RWPE1 (cell line): ENCODE measurements at regions of chr9 and their contacts with region 1.

Region 1: DNA sequence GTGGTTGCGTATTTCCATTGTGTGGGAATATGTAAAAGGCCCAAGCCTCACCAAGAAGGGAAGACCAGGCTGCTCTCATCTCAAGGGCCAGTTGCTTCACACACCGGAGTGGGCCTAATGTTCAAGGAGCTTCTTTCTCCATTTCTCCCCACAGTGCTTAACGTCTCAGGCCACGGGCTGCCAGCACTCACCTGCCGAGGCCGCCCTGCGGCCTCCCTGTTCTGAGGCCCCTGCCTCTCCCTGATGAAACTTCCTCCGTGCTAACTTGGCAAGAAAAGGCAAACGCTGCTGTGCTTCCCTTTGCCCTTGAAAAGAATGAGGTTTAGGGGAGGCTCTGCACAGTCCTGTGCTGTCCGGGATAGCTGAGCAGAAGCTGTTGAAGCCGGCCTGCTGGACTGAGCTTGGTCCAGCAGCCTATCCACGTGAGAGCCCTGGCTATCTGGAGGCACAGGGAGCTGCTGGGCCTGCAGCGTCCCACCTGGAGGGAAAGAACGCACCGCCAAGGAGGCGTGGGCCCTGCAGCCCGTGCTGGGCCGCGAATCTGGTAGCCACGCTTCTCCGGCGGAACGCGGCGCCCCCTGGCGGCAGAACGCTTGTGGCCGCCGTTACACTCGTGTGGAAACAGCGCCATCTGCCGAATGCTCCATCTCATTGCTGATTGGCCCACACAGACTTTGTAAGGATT is 73.5 kb upstream of the PRSS3 start:
- DNase-seq: peak; percentile 82
- H3K27ac ChIP-seq: no peak overlapping the region
- CTCF ChIP-seq: peak; percentile 100

Region 2: GRCh38 chr9:33623658-33624586 is 97.9 kb before region 1 on chr9:
- CTCF ChIA-PET with region 1: interaction called, 80 read pairs
- POLR2A ChIA-PET with region 1: interaction called, 7 read pairs
- DNase-seq: peak; percentile 85
- H3K27ac ChIP-seq: no peak overlapping the region
- CTCF ChIP-seq: peak; percentile 98

Region 3: DNA sequence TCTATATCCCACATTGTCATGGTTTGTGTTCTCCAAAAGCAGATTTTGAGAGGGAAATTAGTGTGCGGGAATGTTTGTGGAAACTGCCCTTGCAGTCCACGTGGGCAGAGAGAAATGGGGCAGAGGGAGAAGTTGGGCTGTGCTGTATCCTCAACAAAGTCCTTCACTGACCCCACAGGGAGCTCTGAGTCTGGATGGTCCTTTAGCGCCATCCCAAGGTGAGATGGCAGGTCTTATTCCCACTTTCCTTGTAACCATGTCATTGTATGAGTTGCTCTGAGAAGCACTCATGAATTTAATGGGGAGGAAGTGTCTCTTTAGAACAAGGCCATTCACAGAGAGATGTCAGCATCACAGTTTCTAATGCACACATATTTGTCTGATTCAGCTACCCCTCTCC is 70.7 kb before region 1 on chr9:
- CTCF ChIA-PET with region 1: interaction called, 11 read pairs
- POLR2A ChIA-PET with region 1: no interaction called
- DNase-seq: no peak
- H3K27ac ChIP-seq: no peak overlapping the region
- CTCF ChIP-seq: no peak

Region 4: DNA sequence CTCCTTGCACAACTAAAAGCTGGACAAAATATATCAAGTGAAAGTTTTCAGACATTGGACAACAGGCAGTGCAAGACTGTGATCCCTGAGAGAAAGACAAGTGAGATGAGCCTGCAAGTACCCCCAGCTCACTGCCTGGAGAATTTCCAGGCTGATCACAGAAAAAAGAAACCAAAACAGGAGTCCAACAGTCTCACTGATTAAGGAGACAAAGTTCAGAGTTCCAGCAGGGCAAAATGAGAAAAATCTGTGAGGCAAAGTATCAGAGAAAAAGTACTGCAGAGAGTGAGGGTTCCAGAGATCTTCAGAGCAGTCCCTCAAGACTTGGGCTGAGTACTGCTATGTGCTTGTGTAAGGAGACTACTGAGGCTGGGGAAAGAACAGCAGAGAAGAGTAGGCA is 17.6 kb after region 1 on chr9:
- CTCF ChIA-PET with region 1: no interaction called
- POLR2A ChIA-PET with region 1: no interaction called
- DNase-seq: no peak
- H3K27ac ChIP-seq: no peak overlapping the region
- CTCF ChIP-seq: no peak

Region 5: DNA sequence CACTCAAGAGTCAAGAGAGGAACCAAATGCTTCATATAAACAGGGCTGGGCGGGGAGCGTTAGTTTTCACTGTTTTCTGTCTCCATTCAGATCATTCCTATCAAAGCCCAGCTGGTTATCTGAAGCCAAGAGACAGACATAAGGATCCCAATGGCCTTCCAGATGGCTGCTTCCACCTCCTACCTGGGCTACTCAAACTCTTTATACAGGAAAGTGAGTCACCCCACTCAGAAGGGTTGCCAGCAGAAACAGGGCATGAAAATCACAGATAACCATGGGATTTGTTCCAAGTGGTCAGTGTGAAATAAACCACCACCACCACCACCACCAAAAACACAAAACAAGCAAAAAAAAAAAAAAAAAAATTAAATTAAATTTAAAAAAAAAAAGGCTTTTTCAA is 79.1 kb after region 1 on chr9:
- CTCF ChIA-PET with region 1: no interaction called
- POLR2A ChIA-PET with region 1: no interaction called
- DNase-seq: no peak
- H3K27ac ChIP-seq: peak overlapping the region; percentile 10; the same call in 1 of the 2 replicates
- CTCF ChIP-seq: no peak